PC-3 (cell line): ENCODE measurements at regions of chr15 and their contacts with region 1.

Region 1: DNA sequence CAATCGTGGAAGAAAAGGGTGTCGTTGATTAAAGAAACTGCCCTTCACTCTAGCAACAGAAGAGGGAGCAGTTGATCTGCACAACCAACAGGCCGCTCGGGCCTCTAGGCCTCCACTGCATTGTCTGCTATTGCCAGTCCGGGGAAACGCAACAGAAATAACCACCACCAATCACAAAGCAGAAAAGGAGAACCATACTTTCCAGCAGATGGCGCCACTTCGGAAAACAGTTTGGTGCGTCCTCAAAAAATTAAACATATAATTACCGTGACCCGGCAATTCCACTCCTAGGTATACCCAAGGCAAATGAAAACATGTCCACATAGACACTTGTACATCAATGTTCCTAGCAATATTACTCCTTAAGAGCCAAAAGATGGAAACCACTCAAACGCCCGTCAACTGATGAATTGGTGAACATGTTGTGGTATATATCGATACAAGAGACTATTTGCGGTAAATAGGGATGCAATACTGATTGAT is 154.1 kb downstream of the TJP1 start:
- DNase-seq: peak; percentile 95
- ATAC-seq: peak; percentile 56
- H3K4me3 ChIP-seq: no peak overlapping the region
- H3K27ac ChIP-seq: no peak overlapping the region
- H3K4me1 ChIP-seq: peaks cover 40% of the 10 kb centered on the region
- H3K27me3 ChIP-seq: no peaks in the 10 kb centered on the region
- CTCF ChIP-seq: peak; percentile 98

Region 2: GRCh38 chr15:29403772-29404171 is 264.4 kb before region 1 on chr15:
- CTCF ChIA-PET with region 1: no interaction called
- POLR2A ChIA-PET with region 1: no interaction called
- intact Hi-C with region 1: no loop called
- DNase-seq: peak; percentile 45
- ATAC-seq: peak; percentile 68
- H3K4me3 ChIP-seq: no peak overlapping the region
- H3K27ac ChIP-seq: no peak overlapping the region
- H3K4me1 ChIP-seq: no peaks in the 10 kb centered on the region
- H3K27me3 ChIP-seq: peaks cover 46% of the 10 kb centered on the region
- CTCF ChIP-seq: peak; percentile 56

Region 3: DNA sequence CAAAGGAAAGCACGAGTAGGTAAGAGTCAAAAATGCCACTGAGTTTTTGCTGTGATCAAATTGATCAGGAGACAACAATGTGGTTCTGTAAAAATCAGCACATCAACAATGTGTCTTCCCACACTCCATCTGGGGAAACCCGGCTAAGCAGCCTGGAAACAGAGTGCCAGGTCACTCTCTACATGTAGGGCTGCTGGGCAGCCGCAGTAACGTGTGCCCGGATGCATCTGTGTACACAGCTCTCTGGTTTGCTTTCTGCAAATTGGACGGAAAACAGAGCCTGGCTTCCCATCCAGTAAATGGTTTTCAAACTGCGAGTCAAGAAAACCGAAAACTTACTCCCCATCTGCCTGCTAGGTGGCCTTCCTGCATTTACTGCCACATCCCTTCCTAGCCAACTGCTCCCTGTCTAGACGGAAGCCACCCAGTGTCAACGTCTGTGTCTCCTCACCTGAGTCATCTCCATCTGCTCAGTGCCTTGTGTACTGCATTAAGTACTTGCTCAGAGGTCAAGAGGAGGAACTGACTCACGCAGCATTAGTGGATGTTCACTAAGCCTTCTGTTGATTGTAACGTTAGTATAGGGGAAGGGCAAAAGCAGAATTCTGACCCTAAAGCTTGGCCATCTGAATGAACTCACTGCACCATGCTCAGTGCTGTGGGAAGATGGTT is 30.0 kb after region 1 on chr15:
- CTCF ChIA-PET with region 1: no interaction called
- POLR2A ChIA-PET with region 1: no interaction called
- intact Hi-C with region 1: loop called (anchors 1 kb)
- DNase-seq: peak; percentile 96
- ATAC-seq: peak; percentile 99
- H3K4me3 ChIP-seq: no peak overlapping the region
- H3K27ac ChIP-seq: peak overlapping the region; percentile 57
- H3K4me1 ChIP-seq: peaks cover 34% of the 10 kb centered on the region
- H3K27me3 ChIP-seq: no peaks in the 10 kb centered on the region
- CTCF ChIP-seq: no peak

Region 4: GRCh38 chr15:29740692-29741311 is 72.6 kb after region 1 on chr15:
- CTCF ChIA-PET with region 1: no interaction called
- POLR2A ChIA-PET with region 1: no interaction called
- intact Hi-C with region 1: loop called (anchors 1 kb)
- DNase-seq: peak; percentile 37
- ATAC-seq: peak; percentile 61; the same call in 1 of the 2 replicates
- H3K4me3 ChIP-seq: no peak overlapping the region
- H3K27ac ChIP-seq: no peak overlapping the region
- H3K4me1 ChIP-seq: peaks cover 20% of the 10 kb centered on the region
- H3K27me3 ChIP-seq: no peaks in the 10 kb centered on the region
- CTCF ChIP-seq: peak; percentile 61

Region 5: GRCh38 chr15:30030350-30030749 is 362.2 kb after region 1 on chr15:
- CTCF ChIA-PET with region 1: no interaction called
- POLR2A ChIA-PET with region 1: no interaction called
- intact Hi-C with region 1: loop called (anchors 1 kb)
- DNase-seq: peak; percentile 72
- ATAC-seq: peak; percentile 72
- H3K4me3 ChIP-seq: no peak overlapping the region
- H3K27ac ChIP-seq: no peak overlapping the region
- H3K4me1 ChIP-seq: no peaks in the 10 kb centered on the region
- H3K27me3 ChIP-seq: no peaks in the 10 kb centered on the region
- CTCF ChIP-seq: peak; percentile 88

Region 6: DNA sequence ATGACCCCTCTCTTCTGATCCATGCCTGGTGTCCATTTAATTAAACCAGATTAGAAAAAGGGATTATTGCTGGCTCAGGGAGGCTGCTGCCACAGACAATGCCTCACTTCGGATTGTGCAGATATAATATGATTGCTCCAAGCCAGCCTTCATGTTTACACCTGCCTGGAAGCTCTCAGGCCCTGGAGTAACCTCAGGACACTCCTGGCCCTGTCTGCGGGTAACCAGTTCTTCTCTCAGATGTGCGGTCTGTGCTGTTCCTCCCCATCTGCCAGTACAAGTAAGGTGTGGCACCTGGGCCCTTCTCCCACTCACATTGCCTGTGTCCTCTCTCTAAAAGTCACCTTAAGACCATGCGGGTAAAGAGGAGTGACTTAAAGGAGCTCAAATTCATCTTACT is 405.8 kb after region 1 on chr15:
- CTCF ChIA-PET with region 1: interaction called, 8 read pairs
- POLR2A ChIA-PET with region 1: no interaction called
- intact Hi-C with region 1: loop called (anchors 1 kb)
- DNase-seq: no peak
- ATAC-seq: no peak
- H3K4me3 ChIP-seq: no peak overlapping the region
- H3K27ac ChIP-seq: no peak overlapping the region
- H3K4me1 ChIP-seq: no peaks in the 10 kb centered on the region
- H3K27me3 ChIP-seq: 0 out of 2 replicates have a peak, but pooled peaks cover 4% of the 10 kb centered on the region
- CTCF ChIP-seq: no peak